Heart left ventricle (tissue), 16 donors: ENCODE measurements at regions of chr9 and their contacts with region 1.

Region 1: GRCh38 chr9:114587385-114588202 is at the start of gene ATP6V1G1:
- DNase-seq: peak; percentile 100
- ATAC-seq: peak; percentile 99 to 100 (median 100)
- H3K4me3 ChIP-seq: peak within 1 kb of the TSS; percentile 67 to 99 (median 88)
- H3K27ac ChIP-seq: peak within 1 kb of the TSS; percentile 75 to 97 (median 84)
- H3K4me1 ChIP-seq: peaks cover 17 to 48% (median 40%) of the 10 kb centered on the region in 12 donors
- H3K27me3 ChIP-seq: no peaks in the 10 kb centered on the region
- CTCF ChIP-seq: peak in 5 of 12 donors; percentile 11 to 46 (median 22)
- POLR2A ChIP-seq: peak; percentile 26 to 91
- total RNA-seq, gene ATP6V1G1: 58.1 to 135 (median 69.1) TPM

Region 2: GRCh38 chr9:114400219-114400618 is 187.4 kb before region 1 on chr9:
- intact Hi-C with region 1: loop called in 3 of 10 experiments (anchors 2 to 10 kb)
- DNase-seq: no peak
- ATAC-seq: no peak
- H3K4me3 ChIP-seq: no peak overlapping the region
- H3K27ac ChIP-seq: no peak overlapping the region
- H3K4me1 ChIP-seq: peaks cover 0 to 27% (median 9%) of the 10 kb centered on the region in 12 donors
- H3K27me3 ChIP-seq: no peaks in the 10 kb centered on the region
- CTCF ChIP-seq: no peak
- POLR2A ChIP-seq: no peak

Region 3: GRCh38 chr9:114405294-114406034 is 182.1 kb before region 1 on chr9:
- intact Hi-C with region 1: loop called in 3 of 10 experiments (anchors 2 to 10 kb)
- DNase-seq: peak; percentile 73 to 81 (median 79)
- ATAC-seq: peak; percentile 76 to 95 (median 92)
- H3K4me3 ChIP-seq: no peak overlapping the region
- H3K27ac ChIP-seq: no peak overlapping the region
- H3K4me1 ChIP-seq: peaks cover 0 to 7% (median 0%) of the 10 kb centered on the region in 12 donors
- H3K27me3 ChIP-seq: no peaks in the 10 kb centered on the region
- CTCF ChIP-seq: peak; percentile 72 to 87 (median 82)
- POLR2A ChIP-seq: no peak

Region 4: GRCh38 chr9:114493521-114494184 is 93.9 kb before region 1 on chr9:
- intact Hi-C with region 1: no loop called
- DNase-seq: no peak
- ATAC-seq: no peak
- H3K4me3 ChIP-seq: no peak overlapping the region
- H3K27ac ChIP-seq: no peak overlapping the region
- H3K4me1 ChIP-seq: no peaks in the 10 kb centered on the region
- H3K27me3 ChIP-seq: peaks cover 0 to 31% (median 3%) of the 10 kb centered on the region in 9 donors
- CTCF ChIP-seq: no peak
- POLR2A ChIP-seq: no peak

Region 5: GRCh38 chr9:114505187-114506081 is 82.2 kb before region 1 on chr9 and contains the start of gene WHRN:
- intact Hi-C with region 1: no loop called
- DNase-seq: peak; percentile 89 to 94 (median 90)
- ATAC-seq: peak; percentile 76 to 98 (median 95)
- H3K4me3 ChIP-seq: peak within 1 kb of the TSS; percentile 20 to 69 (median 58)
- H3K27ac ChIP-seq: peak within 1 kb of the TSS in 1 of 12 donors; percentile 86
- H3K4me1 ChIP-seq: peaks cover 0 to 18% (median 6%) of the 10 kb centered on the region in 12 donors
- H3K27me3 ChIP-seq: peaks cover 5 to 76% (median 48%) of the 10 kb centered on the region in 9 donors
- CTCF ChIP-seq: no peak
- POLR2A ChIP-seq: peak in 1 of 2 donors; percentile 53
- total RNA-seq, gene WHRN: 0.12 to 1.4 (median 0.56) TPM

Region 6: GRCh38 chr9:114611516-114612271 is 24.1 kb after region 1 on chr9:
- intact Hi-C with region 1: loop called in 1 of 10 experiments (anchors 2 kb)
- DNase-seq: peak; percentile 51 to 82 (median 69)
- ATAC-seq: peak in 3 of 4 donors; percentile 75 to 89 (median 86)
- H3K4me3 ChIP-seq: peak overlapping the region; percentile 44 to 95 (median 74)
- H3K27ac ChIP-seq: peak overlapping the region; percentile 41 to 94 (median 76)
- H3K4me1 ChIP-seq: peaks cover 0 to 41% (median 16%) of the 10 kb centered on the region in 12 donors
- H3K27me3 ChIP-seq: no peaks in the 10 kb centered on the region
- CTCF ChIP-seq: no peak
- POLR2A ChIP-seq: no peak